MCF 10A (cell line): ENCODE measurements at regions of chr5 and their contacts with region 1.

Region 1: GRCh38 chr5:58886315-58887207 is 303.7 kb downstream of the RAB3C start:
- DNase-seq: peak; percentile 80
- H3K4me3 Mint-ChIP-seq: no peak overlapping the region
- H3K27ac Mint-ChIP-seq: no peak overlapping the region
- H3K4me1 Mint-ChIP-seq: peaks cover 45% of the 10 kb centered on the region
- H3K27me3 Mint-ChIP-seq: no peaks in the 10 kb centered on the region
- CTCF ChIP-seq: peak; percentile 92

Region 2: GRCh38 chr5:58431832-58432231 is 454.7 kb before region 1 on chr5:
- CTCF ChIA-PET with region 1: no interaction called
- POLR2A ChIA-PET with region 1: no interaction called
- intact Hi-C with region 1: no loop called
- DNase-seq: no peak
- H3K4me3 Mint-ChIP-seq: no peak overlapping the region
- H3K27ac Mint-ChIP-seq: no peak overlapping the region
- H3K4me1 Mint-ChIP-seq: no peaks in the 10 kb centered on the region
- H3K27me3 Mint-ChIP-seq: no peaks in the 10 kb centered on the region
- CTCF ChIP-seq: no peak

Region 3: DNA sequence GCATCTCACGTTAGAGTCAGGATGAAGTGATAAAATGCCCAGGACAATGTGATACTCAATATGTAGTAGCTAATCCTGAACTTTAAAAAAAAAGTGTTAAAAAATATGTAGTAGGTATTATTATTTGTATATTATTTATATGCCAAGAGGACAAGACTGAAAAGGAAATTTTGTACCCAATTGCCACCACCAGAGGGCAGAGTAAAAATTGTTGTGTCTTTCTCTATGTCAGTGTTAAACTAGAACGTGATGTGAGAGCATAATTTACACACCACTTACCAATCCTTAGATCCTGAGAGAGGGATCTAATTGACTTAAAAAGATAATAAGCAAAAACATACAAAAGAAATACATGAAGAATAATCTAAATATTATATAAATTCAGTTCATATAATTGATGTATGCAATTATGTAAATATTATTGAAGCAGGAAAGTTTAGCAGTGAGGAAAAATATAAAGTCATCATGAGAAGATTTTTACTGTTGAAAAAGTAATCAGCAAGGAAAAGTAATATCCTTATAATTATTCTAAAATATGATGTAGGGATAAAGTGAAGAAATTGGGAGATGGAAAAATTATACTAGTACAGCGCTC is 14.8 kb before region 1 on chr5:
- CTCF ChIA-PET with region 1: interaction called, 46 read pairs
- POLR2A ChIA-PET with region 1: interaction called, 8 read pairs
- intact Hi-C with region 1: no loop called
- DNase-seq: peak; percentile 68
- H3K4me3 Mint-ChIP-seq: no peak overlapping the region
- H3K27ac Mint-ChIP-seq: no peak overlapping the region
- H3K4me1 Mint-ChIP-seq: no peaks in the 10 kb centered on the region
- H3K27me3 Mint-ChIP-seq: peaks cover 47% of the 10 kb centered on the region
- CTCF ChIP-seq: peak; percentile 36

Region 4: DNA sequence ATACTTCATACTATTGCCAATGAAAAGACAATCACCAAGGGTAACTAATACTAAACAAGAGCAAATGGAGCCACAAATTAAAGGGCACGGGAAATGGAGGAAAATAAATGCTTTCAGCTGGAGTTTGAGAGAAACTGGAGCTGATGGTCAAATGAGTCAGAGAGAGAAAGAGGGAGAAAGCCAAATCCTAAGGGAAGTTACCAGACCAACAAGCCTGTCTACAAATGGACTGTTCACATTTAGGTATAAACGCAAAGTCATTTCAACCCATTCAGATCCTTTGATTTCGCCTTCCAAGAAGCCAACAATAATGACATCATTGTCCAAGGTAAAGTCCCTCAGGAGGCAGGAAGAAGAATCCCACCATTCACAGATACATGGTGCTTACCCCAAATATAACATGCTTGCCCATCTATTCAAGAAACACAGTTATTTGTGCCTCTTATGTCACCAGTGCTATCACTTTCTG is 48.1 kb after region 1 on chr5:
- CTCF ChIA-PET with region 1: no interaction called
- POLR2A ChIA-PET with region 1: no interaction called
- intact Hi-C with region 1: no loop called
- DNase-seq: no peak
- H3K4me3 Mint-ChIP-seq: no peak overlapping the region
- H3K27ac Mint-ChIP-seq: no peak overlapping the region
- H3K4me1 Mint-ChIP-seq: no peaks in the 10 kb centered on the region
- H3K27me3 Mint-ChIP-seq: peaks cover 34% of the 10 kb centered on the region
- CTCF ChIP-seq: no peak

Region 5: GRCh38 chr5:58972301-58972700 is 85.7 kb after region 1 on chr5:
- CTCF ChIA-PET with region 1: interaction called, 12 read pairs
- POLR2A ChIA-PET with region 1: no interaction called
- intact Hi-C with region 1: no loop called
- DNase-seq: no peak
- H3K4me3 Mint-ChIP-seq: no peak overlapping the region
- H3K27ac Mint-ChIP-seq: no peak overlapping the region
- H3K4me1 Mint-ChIP-seq: no peaks in the 10 kb centered on the region
- H3K27me3 Mint-ChIP-seq: no peaks in the 10 kb centered on the region
- CTCF ChIP-seq: no peak

Region 6: DNA sequence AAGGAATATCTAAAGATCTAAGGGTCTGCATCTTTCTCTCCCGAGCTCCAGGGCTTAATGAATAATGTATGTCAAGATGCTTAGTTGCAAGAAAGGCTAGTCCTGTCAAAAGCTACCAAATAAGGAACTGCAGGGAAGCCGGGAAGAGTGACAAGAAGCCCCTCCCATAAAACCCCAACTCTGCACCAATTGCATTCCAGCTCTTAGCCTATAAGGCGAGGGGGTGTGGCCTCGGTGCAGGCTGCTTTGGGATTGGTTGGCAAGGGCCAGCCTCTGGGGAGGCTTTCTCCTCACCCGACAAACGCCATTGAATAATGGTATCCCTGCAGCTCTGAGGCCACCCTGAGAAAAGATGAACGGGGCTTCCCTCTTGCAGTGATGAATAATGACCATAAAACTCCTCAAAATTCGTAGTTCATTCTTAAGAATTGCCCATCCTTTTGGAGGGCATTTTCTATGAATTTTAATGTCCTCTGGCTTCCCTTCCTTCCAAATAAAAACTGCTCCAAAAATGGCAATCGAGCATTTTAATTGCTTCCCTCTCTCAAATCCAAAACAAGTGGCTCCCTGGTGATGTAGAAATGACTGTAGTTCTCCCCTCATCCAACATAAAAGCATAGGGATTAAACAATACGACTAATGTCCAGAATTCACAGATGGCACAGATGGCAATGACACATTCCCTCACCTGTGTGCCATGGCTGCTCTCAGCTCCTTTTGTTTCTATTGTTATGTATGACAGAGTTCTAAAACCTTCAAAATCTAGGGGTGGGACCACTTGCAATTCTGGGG is 113.4 kb after region 1 on chr5:
- CTCF ChIA-PET with region 1: interaction called, 149 read pairs
- POLR2A ChIA-PET with region 1: interaction called, 3 read pairs
- intact Hi-C with region 1: no loop called
- DNase-seq: no peak
- H3K4me3 Mint-ChIP-seq: no peak overlapping the region
- H3K27ac Mint-ChIP-seq: no peak overlapping the region
- H3K4me1 Mint-ChIP-seq: peaks cover 24% of the 10 kb centered on the region
- H3K27me3 Mint-ChIP-seq: no peaks in the 10 kb centered on the region
- CTCF ChIP-seq: no peak

Region 7: DNA sequence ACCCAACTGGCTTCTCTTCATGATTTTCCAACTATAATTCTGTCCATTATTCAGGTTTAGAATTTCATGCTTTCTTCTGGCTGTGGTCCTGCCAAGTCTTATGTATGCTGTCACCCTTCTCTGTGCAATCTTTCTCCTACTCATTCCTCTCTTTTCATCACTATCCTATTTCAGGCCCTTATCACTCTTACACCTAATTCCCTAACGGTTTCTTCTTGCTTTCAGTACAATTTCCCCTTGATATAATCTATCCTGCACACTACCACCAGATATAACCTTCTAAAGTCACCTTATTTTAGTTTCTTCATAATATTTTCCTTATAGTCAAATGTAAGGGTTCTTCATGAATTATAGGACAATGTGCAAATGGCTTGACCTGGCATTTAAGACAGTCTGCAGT is 132.5 kb after region 1 on chr5:
- CTCF ChIA-PET with region 1: interaction called, 11 read pairs
- POLR2A ChIA-PET with region 1: interaction called, 4 read pairs
- intact Hi-C with region 1: no loop called
- DNase-seq: no peak
- H3K4me3 Mint-ChIP-seq: no peak overlapping the region
- H3K27ac Mint-ChIP-seq: no peak overlapping the region
- H3K4me1 Mint-ChIP-seq: peaks cover 29% of the 10 kb centered on the region
- H3K27me3 Mint-ChIP-seq: no peaks in the 10 kb centered on the region
- CTCF ChIP-seq: no peak

Region 8: DNA sequence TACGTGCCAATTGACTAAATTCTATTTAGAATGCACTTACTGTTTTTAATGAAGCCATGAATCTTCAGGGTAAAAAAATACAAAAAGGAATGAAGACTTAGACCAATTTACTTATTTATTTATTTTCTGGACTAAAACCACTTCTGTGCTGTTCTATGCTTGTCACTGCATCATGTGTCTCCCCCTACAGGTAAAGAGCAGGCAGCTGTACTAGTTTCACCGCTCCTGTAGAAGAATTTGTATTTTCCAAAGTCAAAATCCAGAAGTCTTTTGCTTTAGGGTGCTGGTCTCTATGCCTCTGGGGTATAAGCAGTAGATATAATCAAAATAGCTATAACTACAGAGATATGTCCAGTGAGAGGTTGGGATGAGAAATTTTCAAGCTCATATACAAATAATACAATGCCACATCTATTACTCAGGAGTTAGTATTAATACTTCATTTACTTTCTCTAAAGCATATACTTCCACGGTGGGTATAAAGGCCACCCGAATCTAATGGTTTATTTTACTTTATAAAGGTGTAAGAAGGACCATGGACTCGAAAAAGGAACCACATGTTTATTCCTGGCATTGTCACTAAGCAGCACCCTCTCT is 287.8 kb after region 1 on chr5:
- CTCF ChIA-PET with region 1: interaction called, 49 read pairs
- POLR2A ChIA-PET with region 1: interaction called, 6 read pairs
- intact Hi-C with region 1: loop called (anchors 1 kb)
- DNase-seq: peak; percentile 73
- H3K4me3 Mint-ChIP-seq: no peak overlapping the region
- H3K27ac Mint-ChIP-seq: no peak overlapping the region
- H3K4me1 Mint-ChIP-seq: peaks cover 7% of the 10 kb centered on the region
- H3K27me3 Mint-ChIP-seq: no peaks in the 10 kb centered on the region
- CTCF ChIP-seq: peak; percentile 89

Region 9: GRCh38 chr5:59380350-59380951 is 493.9 kb after region 1 on chr5:
- CTCF ChIA-PET with region 1: interaction called, 5 read pairs
- POLR2A ChIA-PET with region 1: interaction called, 3 read pairs
- intact Hi-C with region 1: loop called (anchors 1 kb)
- DNase-seq: peak; percentile 65
- H3K4me3 Mint-ChIP-seq: no peak overlapping the region
- H3K27ac Mint-ChIP-seq: no peak overlapping the region
- H3K4me1 Mint-ChIP-seq: peaks cover 6% of the 10 kb centered on the region
- H3K27me3 Mint-ChIP-seq: no peaks in the 10 kb centered on the region
- CTCF ChIP-seq: peak; percentile 38